Gastrocnemius medialis (tissue), 4 donors: ENCODE measurements at regions of chr15 and their contacts with region 1.

Region 1: GRCh38 chr15:60397772-60398445 is at the start of gene ANXA2:
- DNase-seq: peak; percentile 84 to 87
- ATAC-seq: peak; percentile 63 to 67
- H3K4me3 ChIP-seq: peak within 1 kb of the TSS; percentile 89 to 95 (median 92)
- H3K27ac ChIP-seq: peak within 1 kb of the TSS; percentile 94 to 99 (median 98)
- H3K4me1 ChIP-seq: peaks cover 42 to 43% of the 10 kb centered on the region in 2 donors
- H3K27me3 ChIP-seq: no peaks in the 10 kb centered on the region
- CTCF ChIP-seq: no peak
- POLR2A ChIP-seq: peak; percentile 89 to 91
- total RNA-seq, gene ANXA2: 266 to 386 (median 323) TPM

Region 2: GRCh38 chr15:60374628-60375081 is 23.3 kb before region 1 on chr15:
- in situ Hi-C with region 1: no loop called
- intact Hi-C with region 1: loop called (anchors 2 kb)
- DNase-seq: peak; percentile 77 to 87
- ATAC-seq: peak; percentile 83 to 86
- H3K4me3 ChIP-seq: peak overlapping the region in 1 of 4 donors; percentile 1
- H3K27ac ChIP-seq: peak overlapping the region; percentile 82 to 89 (median 88)
- H3K4me1 ChIP-seq: peaks cover 93 to 99% of the 10 kb centered on the region in 2 donors
- H3K27me3 ChIP-seq: no peaks in the 10 kb centered on the region
- CTCF ChIP-seq: no peak
- POLR2A ChIP-seq: peak; percentile 42 to 48